Esophagus muscularis mucosa (tissue), 4 donors: ENCODE measurements at regions of chr4 and their contacts with region 1.

Region 1: DNA sequence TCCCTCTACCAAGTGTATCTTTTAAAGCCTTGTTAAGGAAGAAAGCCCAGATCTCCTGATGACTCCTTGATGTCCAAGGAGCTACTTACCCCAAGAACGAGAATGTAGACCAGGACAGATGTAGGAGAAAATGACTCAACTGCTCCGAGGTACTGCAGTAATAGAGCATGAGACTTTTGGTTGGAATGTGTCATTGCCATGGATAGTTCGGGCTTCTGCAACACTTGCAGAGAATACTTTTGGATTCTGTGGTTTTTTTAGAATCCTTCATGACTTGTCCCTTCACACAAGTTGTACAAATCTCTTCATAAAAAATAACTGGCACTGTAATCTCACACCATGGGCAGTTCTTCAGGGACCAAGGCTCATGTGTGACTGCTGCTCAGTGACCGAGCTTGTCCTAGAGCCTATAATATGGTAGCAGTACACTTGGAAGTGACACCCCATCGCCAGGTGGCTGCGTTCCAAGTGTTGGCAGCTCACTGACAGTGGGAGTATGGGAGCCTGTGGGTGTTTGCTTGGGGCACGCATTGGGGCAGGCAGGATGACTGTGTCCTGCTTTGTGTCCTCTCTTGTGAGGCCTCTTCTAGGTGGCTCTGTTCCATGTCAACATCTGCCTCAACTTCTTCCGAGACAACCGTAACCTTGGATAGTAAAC is 87.9 kb upstream of the WDR1 start:
- DNase-seq: no peak
- H3K4me3 ChIP-seq: no peak overlapping the region
- H3K27ac ChIP-seq: no peak overlapping the region
- H3K4me1 ChIP-seq: no peaks in the 10 kb centered on the region
- H3K27me3 ChIP-seq: no peaks in the 10 kb centered on the region
- CTCF ChIP-seq: no peak
- EP300 ChIP-seq: no peak
- POLR2A ChIP-seq: no peak

Region 2: GRCh38 chr4:10237131-10237530 is 32.6 kb after region 1 on chr4:
- intact Hi-C with region 1: loop called (anchors 1 kb)
- DNase-seq: no peak
- H3K4me3 ChIP-seq: no peak overlapping the region
- H3K27ac ChIP-seq: no peak overlapping the region
- H3K4me1 ChIP-seq: peaks cover 0 to 24% (median 9%) of the 10 kb centered on the region in 4 donors
- H3K27me3 ChIP-seq: no peaks in the 10 kb centered on the region
- CTCF ChIP-seq: no peak
- EP300 ChIP-seq: no peak
- POLR2A ChIP-seq: no peak